ENCODE measurements at regions of chr6 and their contacts with region 1.

Region 1: GRCh38 chr6:44655412-44656342 is 268.2 kb downstream of the CDC5L start:
- DNase-seq: peak; percentile 85

Region 2: GRCh38 chr6:45421709-45422502 is 766.2 kb after region 1 on chr6:
- in situ Hi-C with region 1: loop called (anchors 25 kb)
- DNase-seq: peak; percentile 63

Measured in KBM-7 (cell line).